ENCODE measurements at regions of chr14 and their contacts with region 1.

Region 1: GRCh38 chr14:75487155-75487671 is 35.1 kb upstream of the BATF start:
- DNase-seq: peak in 4 of 14 experiments; percentile 8 to 56 (median 36)
- ATAC-seq: peak; percentile 30
- H3K4me3 ChIP-seq: no peak overlapping the region
- H3K4me3 Mint-ChIP-seq: no peak overlapping the region
- H3K27ac ChIP-seq: no peak overlapping the region
- H3K27ac Mint-ChIP-seq: no peak overlapping the region
- H3K4me1 ChIP-seq: peaks cover 13% of the 10 kb centered on the region
- H3K4me1 Mint-ChIP-seq: peaks cover 13% of the 10 kb centered on the region
- H3K27me3 ChIP-seq: no peaks in the 10 kb centered on the region
- H3K27me3 Mint-ChIP-seq: no peaks in the 10 kb centered on the region
- CTCF ChIP-seq: no peak

Region 2: DNA sequence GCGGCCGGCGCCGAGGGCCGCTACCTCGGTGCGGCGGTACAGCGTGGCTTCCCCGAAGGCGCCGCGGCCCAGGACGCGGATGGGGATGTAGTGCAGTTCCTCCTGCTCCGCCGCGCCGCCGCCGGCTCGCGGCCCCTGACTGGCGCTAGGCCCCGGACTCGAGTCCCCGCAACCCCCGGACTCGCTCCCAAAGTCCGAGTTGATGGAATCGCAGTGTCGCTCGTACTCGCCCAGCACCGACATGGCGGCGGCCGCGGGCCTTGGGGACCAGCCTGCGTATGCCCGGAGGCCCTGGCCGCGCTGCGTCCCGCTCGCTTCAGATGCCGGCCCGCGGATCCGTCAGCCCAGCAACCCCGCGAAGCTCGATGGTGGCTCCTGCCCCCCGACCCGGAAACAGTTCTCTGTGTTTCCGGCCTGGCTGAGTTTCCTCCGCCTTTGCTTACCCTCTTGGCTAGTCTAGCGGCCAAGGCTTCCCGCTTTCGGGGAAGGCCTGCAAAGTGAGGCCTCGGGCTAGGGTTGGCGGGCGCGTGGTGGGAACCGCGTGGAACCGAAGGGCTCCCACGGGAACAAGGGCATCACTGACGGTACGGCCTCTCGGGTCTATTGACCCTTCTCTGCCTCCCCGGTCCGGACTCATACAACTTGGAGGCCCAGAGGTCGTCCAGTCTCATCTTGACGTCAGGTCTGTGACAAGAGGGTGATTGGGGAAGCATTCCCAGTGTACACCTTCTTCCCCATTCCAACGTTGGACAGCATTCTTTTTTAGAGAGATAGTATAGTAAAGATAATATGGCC is 360.3 kb before region 1 on chr14 and contains the start of gene NEK9:
- CTCF ChIA-PET with region 1: no interaction called
- POLR2A ChIA-PET with region 1: interaction called, 3 read pairs
- intact Hi-C with region 1: loop called (anchors 2 kb)
- DNase-seq: peak; percentile 82 to 93 (median 87)
- ATAC-seq: peak; percentile 82
- H3K4me3 ChIP-seq: peak within 1 kb of the TSS; percentile 92
- H3K4me3 Mint-ChIP-seq: peak within 1 kb of the TSS; percentile 99
- H3K27ac ChIP-seq: peak within 1 kb of the TSS; percentile 89 to 93
- H3K27ac Mint-ChIP-seq: peak within 1 kb of the TSS; percentile 90
- H3K4me1 ChIP-seq: peaks cover 36% of the 10 kb centered on the region
- H3K4me1 Mint-ChIP-seq: peaks cover 44% of the 10 kb centered on the region
- H3K27me3 ChIP-seq: no peaks in the 10 kb centered on the region
- H3K27me3 Mint-ChIP-seq: no peaks in the 10 kb centered on the region
- CTCF ChIP-seq: no peak
- total RNA-seq, gene NEK9: 53.5 to 54.1 TPM

Region 3: DNA sequence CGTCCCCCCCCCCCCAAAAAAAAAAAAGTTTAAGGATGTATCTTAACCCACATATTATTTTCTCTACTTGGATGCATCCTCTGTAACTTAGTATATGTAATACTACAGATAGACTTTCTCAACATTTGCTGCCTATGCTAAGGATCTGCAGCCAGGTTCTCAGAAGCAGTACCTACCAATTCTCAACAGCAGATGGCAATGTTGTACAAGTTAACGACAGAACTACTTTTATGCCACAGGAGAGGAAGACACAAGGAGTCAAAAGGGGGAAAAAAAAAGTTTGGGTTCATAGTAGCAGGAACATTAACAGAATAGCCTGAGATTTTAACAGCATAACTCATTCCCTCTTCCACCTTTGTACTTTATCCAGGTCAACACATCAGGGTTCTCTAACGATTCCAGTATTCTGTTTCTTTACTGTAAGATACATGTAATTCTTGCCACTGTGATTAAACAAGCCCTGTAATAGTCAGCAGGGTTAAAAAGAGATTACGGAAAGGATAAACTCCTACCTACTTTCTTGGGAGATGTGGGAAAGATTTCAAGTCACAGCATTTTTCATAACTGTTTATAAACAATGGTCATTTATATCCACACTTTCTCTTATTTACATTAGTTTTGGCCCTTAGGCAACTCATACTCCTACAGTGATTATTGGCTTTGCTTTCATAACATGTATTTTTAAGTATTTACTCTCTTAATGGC is 354.7 kb before region 1 on chr14:
- CTCF ChIA-PET with region 1: no interaction called
- POLR2A ChIA-PET with region 1: interaction called, 3 read pairs
- intact Hi-C with region 1: loop called (anchors 2 kb)
- DNase-seq: peak in 9 of 14 experiments; percentile 6 to 87 (median 46)
- ATAC-seq: peak; percentile 95
- H3K4me3 ChIP-seq: no peak overlapping the region
- H3K4me3 Mint-ChIP-seq: no peak overlapping the region
- H3K27ac ChIP-seq: no peak overlapping the region
- H3K27ac Mint-ChIP-seq: peak overlapping the region; percentile 2
- H3K4me1 ChIP-seq: peaks cover 10% of the 10 kb centered on the region
- H3K4me1 Mint-ChIP-seq: peaks cover 15% of the 10 kb centered on the region
- H3K27me3 ChIP-seq: no peaks in the 10 kb centered on the region
- H3K27me3 Mint-ChIP-seq: no peaks in the 10 kb centered on the region
- CTCF ChIP-seq: peak; percentile 73

Measured in CD4-positive, alpha-beta T cell (primary cell).